ENCODE measurements at regions of chr16 and their contacts with region 1.

Region 1: GRCh38 chr16:69796351-69797118 is 34.4 kb downstream of the WWP2 start:
- DNase-seq: peak; percentile 58
- CTCF ChIP-seq: peak; percentile 77

Region 2: GRCh38 chr16:69613378-69614154 is 183.0 kb before region 1 on chr16:
- CTCF ChIA-PET with region 1: no interaction called
- POLR2A ChIA-PET with region 1: no interaction called
- DNase-seq: peak; percentile 44
- CTCF ChIP-seq: no peak

Region 3: DNA sequence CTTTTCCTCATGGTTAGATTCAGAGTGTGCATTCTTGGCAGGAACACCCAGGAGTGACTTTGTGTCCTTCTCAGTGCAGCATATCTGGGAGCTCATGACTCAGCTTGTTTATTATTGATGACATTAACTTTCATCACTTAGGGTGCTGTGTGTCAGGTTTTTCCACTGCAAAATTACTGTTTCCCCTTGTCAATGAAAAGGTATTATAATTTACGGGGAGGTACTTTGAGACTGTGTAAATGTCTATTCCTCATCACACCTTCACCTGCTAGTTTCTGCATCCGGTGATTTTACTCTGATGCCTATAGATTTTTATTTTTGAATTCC is 16.1 kb after region 1 on chr16:
- CTCF ChIA-PET with region 1: interaction called, 23 read pairs
- POLR2A ChIA-PET with region 1: no interaction called
- DNase-seq: no peak
- CTCF ChIP-seq: no peak

Region 4: DNA sequence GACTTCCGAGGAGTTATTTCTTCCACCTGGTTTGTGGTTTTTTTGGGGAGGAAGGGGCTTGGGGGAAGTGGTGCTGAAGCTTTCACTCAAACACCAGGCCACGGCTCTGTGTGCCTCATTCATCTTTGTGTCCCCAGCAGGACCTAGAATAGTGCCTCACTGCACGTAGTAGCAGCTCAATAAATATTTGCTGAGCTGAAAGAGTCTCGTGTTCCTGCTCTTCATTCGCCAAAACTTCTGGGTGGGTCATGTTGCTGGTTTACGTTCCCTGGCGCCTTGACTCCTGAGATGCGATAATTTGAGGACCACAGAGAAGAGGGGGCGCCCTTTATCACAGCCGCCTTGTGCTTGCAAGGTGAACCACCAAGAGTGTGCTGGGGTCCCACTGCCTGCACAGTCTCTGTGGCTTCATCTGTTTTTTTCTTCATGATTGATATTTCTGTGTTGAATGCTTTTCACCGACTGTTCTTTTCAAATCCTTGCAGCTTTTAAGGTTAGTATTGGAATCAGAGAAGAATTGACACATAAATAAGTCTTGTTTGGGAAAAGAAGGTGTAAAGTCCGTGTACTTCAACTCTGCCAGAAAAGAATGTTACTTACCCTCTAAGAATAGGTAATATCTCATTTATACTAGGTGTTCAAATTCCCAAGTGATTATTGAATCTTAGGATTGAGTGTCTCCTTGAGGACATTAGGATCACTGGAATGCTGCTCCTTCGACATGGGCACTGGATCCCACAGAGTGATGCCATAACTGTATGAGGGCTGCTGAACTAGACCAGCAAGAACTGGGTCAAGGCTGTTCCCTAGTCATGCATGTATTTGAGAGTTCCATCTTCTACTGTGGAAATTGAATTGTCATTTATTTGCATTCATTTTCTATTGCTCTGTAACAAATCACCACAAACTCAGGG is 61.9 kb after region 1 on chr16:
- CTCF ChIA-PET with region 1: interaction called, 11 read pairs
- POLR2A ChIA-PET with region 1: no interaction called
- DNase-seq: no peak
- CTCF ChIP-seq: no peak